Gastrocnemius medialis (tissue), 4 donors: ENCODE measurements at regions of chr3 and their contacts with region 1.

Region 1: DNA sequence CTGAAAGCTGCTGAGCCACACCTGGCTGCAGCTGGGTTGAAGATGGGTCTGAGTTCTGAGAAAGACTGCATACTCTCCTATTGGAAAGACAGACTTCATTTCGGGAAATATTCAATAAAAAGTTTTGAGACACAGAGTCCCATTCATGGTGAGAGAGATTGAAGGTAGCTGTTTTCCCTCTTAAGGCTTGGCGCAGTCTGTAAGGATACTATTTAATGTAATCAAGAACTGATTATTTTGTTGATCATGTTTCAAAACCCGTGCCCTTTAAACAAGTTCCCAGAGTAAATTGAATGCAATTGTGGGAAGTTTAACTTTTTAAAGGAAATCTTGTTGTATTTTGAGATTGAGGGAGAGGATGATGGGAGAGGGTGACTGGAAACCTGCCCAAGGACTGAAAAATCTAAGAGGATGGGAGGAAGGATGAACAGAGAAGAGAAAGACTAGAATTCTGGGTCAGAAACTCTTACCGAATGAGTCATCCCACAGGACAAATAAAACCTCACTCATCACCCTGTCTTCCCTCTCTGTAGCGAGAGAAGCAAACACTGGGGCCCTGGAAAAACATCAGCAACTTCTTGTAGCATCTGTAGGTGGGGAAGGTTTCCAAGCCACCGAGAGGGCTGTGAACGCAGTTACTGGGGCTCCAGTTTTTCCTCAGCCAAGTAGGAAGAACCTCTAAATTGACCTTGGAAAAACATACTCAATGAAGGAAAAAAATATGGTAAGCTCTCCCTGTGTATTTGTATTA is 193.2 kb upstream of the TPRG1 start:
- DNase-seq: peak in 1 of 2 donors; percentile 6
- ATAC-seq: peak; percentile 34 to 47
- H3K4me3 ChIP-seq: no peak overlapping the region
- H3K27ac ChIP-seq: peak overlapping the region; percentile 27 to 51 (median 37)
- H3K4me1 ChIP-seq: no peaks in the 10 kb centered on the region
- H3K27me3 ChIP-seq: no peaks in the 10 kb centered on the region
- CTCF ChIP-seq: no peak
- POLR2A ChIP-seq: no peak

Region 2: GRCh38 chr3:189157232-189158007 is 178.8 kb after region 1 on chr3:
- in situ Hi-C with region 1: loop called in 2 of 4 experiments (anchors 10 to 25 kb)
- intact Hi-C with region 1: no loop called
- DNase-seq: no peak
- ATAC-seq: no peak
- H3K4me3 ChIP-seq: no peak overlapping the region
- H3K27ac ChIP-seq: no peak overlapping the region
- H3K4me1 ChIP-seq: no peaks in the 10 kb centered on the region
- H3K27me3 ChIP-seq: no peaks in the 10 kb centered on the region
- CTCF ChIP-seq: no peak
- POLR2A ChIP-seq: no peak

Region 3: GRCh38 chr3:189167027-189167766 is 188.6 kb after region 1 on chr3:
- in situ Hi-C with region 1: loop called in 1 of 4 experiments (anchors 25 kb)
- intact Hi-C with region 1: no loop called
- DNase-seq: no peak
- ATAC-seq: no peak
- H3K4me3 ChIP-seq: no peak overlapping the region
- H3K27ac ChIP-seq: no peak overlapping the region
- H3K4me1 ChIP-seq: no peaks in the 10 kb centered on the region
- H3K27me3 ChIP-seq: no peaks in the 10 kb centered on the region
- CTCF ChIP-seq: no peak
- POLR2A ChIP-seq: no peak